ENCODE measurements at regions of chr6 and their contacts with region 1.

Region 1: GRCh38 chr6:168884646-168885086 is 369.0 kb downstream of the THBS2 start:
- DNase-seq: peak; percentile 31
- ATAC-seq: peak; percentile 97
- H3K4me3 ChIP-seq: no peak overlapping the region
- H3K27ac ChIP-seq: no peak overlapping the region
- H3K4me1 ChIP-seq: 0 out of 4 replicates have a peak, but pooled peaks cover 0 to 3% of the 10 kb centered on the region in 2 experiments
- H3K27me3 ChIP-seq: peaks cover 8% of the 10 kb centered on the region; the same call in 1 of the 2 replicates
- CTCF ChIP-seq: peak; percentile 88 to 91 (median 90)
- POLR2A ChIP-seq: no peak
- RAD21 ChIP-seq: peak; percentile 97

Region 2: GRCh38 chr6:168150551-168151320 is 733.9 kb before region 1 on chr6:
- CTCF ChIA-PET with region 1: no interaction called
- POLR2A ChIA-PET with region 1: no interaction called
- RAD21 ChIA-PET with region 1: no interaction called
- intact Hi-C with region 1: loop called (anchors 2 kb)
- DNase-seq: no peak
- ATAC-seq: peak; percentile 46; the same call in 1 of the 2 replicates
- H3K4me3 ChIP-seq: no peak overlapping the region
- H3K27ac ChIP-seq: no peak overlapping the region
- H3K4me1 ChIP-seq: peaks cover 0 to 12% of the 10 kb centered on the region in 2 experiments; a peak in 2 of 4 replicates
- H3K27me3 ChIP-seq: peaks cover 24% of the 10 kb centered on the region
- CTCF ChIP-seq: peak; percentile 25 to 56 (median 50); a peak in 4 of 6 replicates
- POLR2A ChIP-seq: no peak
- RAD21 ChIP-seq: peak; percentile 84

Region 3: GRCh38 chr6:168475188-168476013 is 409.3 kb before region 1 on chr6:
- CTCF ChIA-PET with region 1: no interaction called
- POLR2A ChIA-PET with region 1: interaction called, 3 read pairs
- RAD21 ChIA-PET with region 1: no interaction called
- intact Hi-C with region 1: loop called (anchors 10 kb)
- DNase-seq: no peak
- ATAC-seq: no peak
- H3K4me3 ChIP-seq: no peak overlapping the region
- H3K27ac ChIP-seq: no peak overlapping the region
- H3K4me1 ChIP-seq: no peaks in the 10 kb centered on the region
- H3K27me3 ChIP-seq: peaks cover 22% of the 10 kb centered on the region
- CTCF ChIP-seq: no peak
- POLR2A ChIP-seq: no peak
- RAD21 ChIP-seq: no peak

Region 4: GRCh38 chr6:168616816-168617765 is 267.6 kb before region 1 on chr6:
- CTCF ChIA-PET with region 1: no interaction called
- POLR2A ChIA-PET with region 1: no interaction called
- RAD21 ChIA-PET with region 1: no interaction called
- intact Hi-C with region 1: loop called (anchors 1 kb)
- DNase-seq: no peak
- ATAC-seq: peak; percentile 66
- H3K4me3 ChIP-seq: no peak overlapping the region
- H3K27ac ChIP-seq: no peak overlapping the region
- H3K4me1 ChIP-seq: no peaks in the 10 kb centered on the region; a peak in 1 of 4 replicates
- H3K27me3 ChIP-seq: no peaks in the 10 kb centered on the region
- CTCF ChIP-seq: peak; percentile 28 to 49 (median 33); a peak in 4 of 6 replicates
- POLR2A ChIP-seq: no peak
- RAD21 ChIP-seq: peak; percentile 73

Region 5: DNA sequence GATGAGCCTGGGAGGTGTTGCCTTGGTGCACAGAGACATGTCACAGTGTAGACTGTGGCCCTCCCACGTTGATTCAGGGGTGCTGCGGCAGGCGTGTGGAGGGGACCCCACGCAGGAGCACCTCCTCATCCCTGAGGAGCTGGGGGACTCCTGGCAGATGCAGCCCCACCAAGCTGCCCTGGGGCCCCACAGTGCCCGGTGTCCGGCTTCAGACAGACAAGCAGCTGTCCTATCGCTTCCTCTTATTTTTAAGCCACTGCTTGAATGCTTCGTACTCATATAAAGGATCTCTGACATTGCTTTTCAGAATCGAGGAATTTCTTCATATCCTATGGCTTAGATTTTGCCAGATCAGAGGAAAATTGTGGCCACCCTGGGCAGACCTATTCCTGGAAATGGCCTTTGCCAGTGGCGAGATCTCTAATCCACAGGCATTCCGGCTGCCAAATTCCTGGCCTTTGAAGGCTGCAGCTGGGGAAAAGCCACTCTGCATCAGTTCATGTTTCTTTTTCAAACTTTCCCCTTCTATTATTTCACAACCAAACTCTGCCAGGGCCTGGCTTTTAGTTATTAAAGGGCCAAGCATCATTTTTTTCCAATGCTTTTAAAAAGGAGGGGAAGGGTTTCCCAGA is 32.0 kb after region 1 on chr6:
- CTCF ChIA-PET with region 1: no interaction called
- POLR2A ChIA-PET with region 1: no interaction called
- RAD21 ChIA-PET with region 1: no interaction called
- intact Hi-C with region 1: no loop called
- DNase-seq: no peak
- ATAC-seq: no peak
- H3K4me3 ChIP-seq: no peak overlapping the region
- H3K27ac ChIP-seq: no peak overlapping the region
- H3K4me1 ChIP-seq: no peaks in the 10 kb centered on the region
- H3K27me3 ChIP-seq: no peaks in the 10 kb centered on the region
- CTCF ChIP-seq: no peak
- POLR2A ChIP-seq: no peak
- RAD21 ChIP-seq: no peak

Measured in HCT116 (cell line).